T-cell (primary cell): ENCODE measurements at regions of chr12 and their contacts with region 1.

Region 1: DNA sequence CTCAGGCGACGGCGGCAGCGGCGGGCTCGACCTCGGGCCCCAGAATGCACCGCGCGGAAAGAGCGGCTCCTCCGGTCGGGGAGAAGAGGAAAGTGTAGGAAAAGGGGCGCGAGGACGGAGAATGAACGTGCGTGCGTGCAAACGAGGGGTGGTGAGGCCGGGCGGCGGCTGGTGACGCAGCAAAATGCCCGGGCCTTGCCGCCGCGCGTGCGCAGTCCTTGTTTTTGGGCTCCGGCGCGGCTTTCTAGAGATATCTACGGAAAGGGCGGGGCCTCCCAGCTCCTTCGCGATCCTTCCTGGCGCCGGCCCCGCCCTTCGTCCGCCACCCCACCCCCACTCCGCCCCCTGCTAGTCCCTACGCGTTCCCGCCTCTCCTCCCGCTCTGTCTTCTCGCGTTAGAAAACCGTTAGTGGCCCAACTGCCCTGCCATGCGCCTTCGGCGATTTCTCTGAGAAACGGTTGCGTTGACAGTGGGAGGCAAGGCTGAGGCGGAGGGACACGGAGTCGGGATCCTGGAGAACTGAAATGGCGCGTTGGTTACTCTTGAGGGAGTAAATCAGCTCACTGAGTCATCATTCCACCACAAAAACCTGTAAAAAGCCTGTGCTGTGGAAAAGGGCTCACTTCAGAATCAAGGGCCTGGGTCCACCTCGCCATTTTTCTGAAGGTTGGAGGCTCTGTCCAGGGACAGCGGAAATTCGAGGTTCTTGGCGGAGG is at the start of gene PTGES3:
- DNase-seq: peak; percentile 92 to 99 (median 96)
- ATAC-seq: peak; percentile 75 to 85 (median 83)
- H3K4me3 ChIP-seq: peak within 1 kb of the TSS; percentile 75 to 91
- H3K4me3 Mint-ChIP-seq: peak within 1 kb of the TSS; percentile 99
- H3K27ac ChIP-seq: peak within 1 kb of the TSS; percentile 91
- H3K27ac Mint-ChIP-seq: peak within 1 kb of the TSS; percentile 98 to 100
- H3K4me1 ChIP-seq: peaks cover 13 to 39% of the 10 kb centered on the region in 2 experiments
- H3K4me1 Mint-ChIP-seq: peaks cover 23 to 48% (median 37%) of the 10 kb centered on the region in 3 donors
- H3K27me3 ChIP-seq: no peaks in the 10 kb centered on the region
- H3K27me3 Mint-ChIP-seq: no peaks in the 10 kb centered on the region
- total RNA-seq, gene PTGES3: 121 to 155 (median 145) TPM

Region 2: GRCh38 chr12:56677680-56678079 is 10.6 kb before region 1 on chr12:
- CTCF ChIA-PET with region 1: interaction called, 6 to 7 read pairs
- POLR2A ChIA-PET with region 1: interaction called in 1 of 2 experiments, 13 read pairs
- DNase-seq: no peak
- ATAC-seq: peak in 1 of 4 experiments; percentile 7
- H3K4me3 ChIP-seq: no peak overlapping the region
- H3K4me3 Mint-ChIP-seq: peak overlapping the region in 1 of 3 donors; percentile 53
- H3K27ac ChIP-seq: peak overlapping the region; percentile 24
- H3K27ac Mint-ChIP-seq: peak overlapping the region; percentile 20 to 54
- H3K4me1 ChIP-seq: peaks cover 9 to 66% of the 10 kb centered on the region in 2 experiments
- H3K4me1 Mint-ChIP-seq: peaks cover 58 to 80% (median 79%) of the 10 kb centered on the region in 3 donors
- H3K27me3 ChIP-seq: no peaks in the 10 kb centered on the region
- H3K27me3 Mint-ChIP-seq: no peaks in the 10 kb centered on the region

Region 3: DNA sequence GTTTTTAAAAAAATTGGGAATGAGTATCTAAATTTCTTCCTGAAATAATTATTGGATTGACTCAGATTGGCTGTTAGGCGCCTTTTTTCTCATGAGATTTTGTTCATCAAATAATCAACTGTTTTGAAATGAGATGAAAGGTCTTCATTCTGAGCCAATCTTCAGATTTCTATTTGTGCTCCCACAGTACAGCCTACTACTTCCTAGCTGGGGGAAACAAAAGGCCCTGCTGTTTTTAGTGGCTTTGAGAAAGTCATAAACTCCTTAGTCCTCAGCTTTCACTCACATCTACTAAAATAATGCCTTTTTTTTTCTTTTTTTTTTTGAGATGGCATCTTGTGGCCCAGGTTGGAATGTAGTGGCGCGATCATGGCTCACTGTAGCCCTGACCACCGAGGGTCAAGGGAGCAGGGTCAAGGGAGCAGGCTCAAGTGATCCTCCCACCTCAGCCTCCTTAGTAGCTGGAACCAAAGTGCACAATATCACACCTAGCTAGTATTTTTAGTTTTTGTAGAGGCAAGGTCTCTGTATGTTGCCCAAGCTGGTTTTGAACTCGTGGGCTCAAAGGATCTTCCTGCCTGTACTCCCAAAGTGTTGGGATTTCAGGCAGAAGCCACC is 21.6 kb after region 1 on chr12:
- CTCF ChIA-PET with region 1: no interaction called
- POLR2A ChIA-PET with region 1: interaction called, 3 to 16 read pairs
- DNase-seq: no peak
- ATAC-seq: peak in 1 of 4 experiments; percentile 56
- H3K4me3 ChIP-seq: no peak overlapping the region
- H3K4me3 Mint-ChIP-seq: no peak overlapping the region
- H3K27ac ChIP-seq: no peak overlapping the region
- H3K27ac Mint-ChIP-seq: peak overlapping the region in 1 of 2 donors; percentile 71
- H3K4me1 ChIP-seq: no peaks in the 10 kb centered on the region
- H3K4me1 Mint-ChIP-seq: peaks cover 0 to 4% (median 3%) of the 10 kb centered on the region in 3 donors
- H3K27me3 ChIP-seq: no peaks in the 10 kb centered on the region
- H3K27me3 Mint-ChIP-seq: no peaks in the 10 kb centered on the region

Region 4: GRCh38 chr12:56718149-56718548 is 29.9 kb after region 1 on chr12:
- CTCF ChIA-PET with region 1: no interaction called
- POLR2A ChIA-PET with region 1: interaction called, 6 to 10 read pairs
- DNase-seq: no peak
- ATAC-seq: no peak
- H3K4me3 ChIP-seq: no peak overlapping the region
- H3K4me3 Mint-ChIP-seq: no peak overlapping the region
- H3K27ac ChIP-seq: no peak overlapping the region
- H3K27ac Mint-ChIP-seq: no peak overlapping the region
- H3K4me1 ChIP-seq: peaks cover 46 to 65% of the 10 kb centered on the region in 2 experiments
- H3K4me1 Mint-ChIP-seq: peaks cover 66 to 69% (median 68%) of the 10 kb centered on the region in 3 donors
- H3K27me3 ChIP-seq: no peaks in the 10 kb centered on the region
- H3K27me3 Mint-ChIP-seq: no peaks in the 10 kb centered on the region

Region 5: DNA sequence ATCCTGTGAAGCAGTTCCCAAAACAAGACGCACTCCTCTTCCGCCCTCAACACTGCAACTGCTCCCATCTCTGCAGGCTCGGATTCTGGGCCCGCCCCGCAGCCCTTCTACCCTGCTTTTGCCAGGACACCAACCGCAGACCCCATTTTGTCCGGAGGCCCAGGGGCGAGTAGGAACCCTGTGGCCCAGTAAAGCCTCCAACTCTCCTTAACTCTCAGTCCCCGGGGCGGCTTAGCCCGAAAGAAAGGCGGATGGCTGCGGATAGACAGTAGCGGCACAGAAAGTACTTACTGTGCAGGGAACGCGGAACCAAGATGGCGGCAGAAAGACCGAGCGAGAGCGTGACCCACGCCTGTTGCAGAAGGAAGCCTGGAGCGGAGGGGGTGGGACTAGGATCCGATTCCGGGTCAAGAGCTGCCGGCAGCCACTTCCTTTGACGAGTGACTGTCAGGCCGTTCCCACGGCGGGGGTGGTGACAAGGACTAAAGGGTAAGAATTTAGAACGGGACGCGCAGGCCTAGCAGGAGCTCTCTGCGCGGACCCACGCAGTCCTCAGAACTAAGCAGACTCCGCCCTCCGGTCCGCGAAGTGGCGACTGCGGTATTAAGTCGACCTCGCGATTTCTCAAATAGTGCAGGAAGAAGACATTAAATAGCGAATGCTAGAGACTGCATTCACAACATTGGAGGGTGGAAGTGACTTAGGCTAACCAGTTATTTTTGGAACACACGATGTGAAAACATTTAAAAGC is 36.9 kb after region 1 on chr12 and contains the start of gene NACA:
- CTCF ChIA-PET with region 1: interaction called in 1 of 2 experiments, 9 read pairs
- POLR2A ChIA-PET with region 1: interaction called, 6 to 14 read pairs
- DNase-seq: peak; percentile 86 to 100 (median 98)
- ATAC-seq: peak; percentile 94 to 97 (median 96)
- H3K4me3 ChIP-seq: peak within 1 kb of the TSS; percentile 89 to 97
- H3K4me3 Mint-ChIP-seq: peak within 1 kb of the TSS; percentile 96 to 99 (median 98)
- H3K27ac ChIP-seq: peak within 1 kb of the TSS; percentile 90
- H3K27ac Mint-ChIP-seq: peak within 1 kb of the TSS; percentile 90 to 97
- H3K4me1 ChIP-seq: peaks cover 34 to 44% of the 10 kb centered on the region in 2 experiments
- H3K4me1 Mint-ChIP-seq: peaks cover 49 to 60% (median 55%) of the 10 kb centered on the region in 3 donors
- H3K27me3 ChIP-seq: no peaks in the 10 kb centered on the region
- H3K27me3 Mint-ChIP-seq: no peaks in the 10 kb centered on the region
- total RNA-seq, gene NACA: 1,098 to 1,258 (median 1,167) TPM